Activated CD8-positive, alpha-beta T cell treated with anti-CD3 and anti-CD28 coated beads, Interleukin-2, amount 10 ng/mL, durations not matched to agents 7 days and 5 days (primary cell): ENCODE measurements at regions of chr6 and their contacts with region 1.

Region 1: GRCh38 chr6:16332175-16332542 is 93.8 kb downstream of the GMPR start:
- DNase-seq: peak; percentile 86
- ATAC-seq: peak; percentile 94
- H3K4me3 Mint-ChIP-seq: no peak overlapping the region
- H3K27ac Mint-ChIP-seq: no peak overlapping the region
- H3K4me1 Mint-ChIP-seq: no peaks in the 10 kb centered on the region
- H3K27me3 Mint-ChIP-seq: no peaks in the 10 kb centered on the region

Region 2: GRCh38 chr6:15817121-15817520 is 515.0 kb before region 1 on chr6:
- CTCF ChIA-PET with region 1: no interaction called
- POLR2A ChIA-PET with region 1: no interaction called
- DNase-seq: no peak
- ATAC-seq: no peak
- H3K4me3 Mint-ChIP-seq: no peak overlapping the region
- H3K27ac Mint-ChIP-seq: no peak overlapping the region
- H3K4me1 Mint-ChIP-seq: no peaks in the 10 kb centered on the region
- H3K27me3 Mint-ChIP-seq: peaks cover 3% of the 10 kb centered on the region

Region 3: DNA sequence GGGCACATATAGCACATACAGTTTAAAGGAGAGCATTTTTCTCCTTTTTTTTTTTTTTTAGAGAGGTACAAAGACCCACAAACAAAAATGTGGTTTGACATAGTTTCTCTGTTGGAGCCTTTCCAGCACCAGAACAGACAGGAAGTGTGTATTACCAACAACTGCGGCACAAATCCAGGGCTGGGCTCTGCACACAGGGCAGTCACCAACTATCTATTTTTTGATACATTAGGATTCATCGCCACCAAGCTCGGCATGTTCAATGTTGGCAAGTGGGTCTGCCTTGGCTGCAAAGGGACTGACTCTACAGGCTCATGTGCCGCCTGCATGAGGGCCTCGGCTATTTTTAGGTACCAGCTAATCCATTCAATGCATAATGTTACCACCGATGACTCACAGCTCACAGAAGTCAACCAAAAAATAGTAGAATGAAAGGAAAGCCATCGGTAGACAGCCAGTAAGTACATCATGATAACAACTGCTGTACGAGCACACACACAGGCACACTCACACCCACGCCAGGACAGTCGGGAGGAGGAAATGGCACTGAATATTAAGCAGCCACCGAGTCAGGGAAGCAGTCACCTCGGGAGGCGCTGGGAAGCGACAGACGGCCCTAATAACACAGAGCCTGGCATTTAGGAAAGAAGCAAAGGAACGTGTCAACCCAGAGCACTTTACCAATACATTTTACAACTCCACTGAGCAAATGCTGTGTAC is 12.2 kb before region 1 on chr6:
- CTCF ChIA-PET with region 1: interaction called, 109 read pairs
- POLR2A ChIA-PET with region 1: no interaction called
- DNase-seq: peak; percentile 79
- ATAC-seq: peak; percentile 79
- H3K4me3 Mint-ChIP-seq: peak overlapping the region; percentile 61
- H3K27ac Mint-ChIP-seq: peak overlapping the region; percentile 94
- H3K4me1 Mint-ChIP-seq: peaks cover 76% of the 10 kb centered on the region
- H3K27me3 Mint-ChIP-seq: no peaks in the 10 kb centered on the region

Region 4: DNA sequence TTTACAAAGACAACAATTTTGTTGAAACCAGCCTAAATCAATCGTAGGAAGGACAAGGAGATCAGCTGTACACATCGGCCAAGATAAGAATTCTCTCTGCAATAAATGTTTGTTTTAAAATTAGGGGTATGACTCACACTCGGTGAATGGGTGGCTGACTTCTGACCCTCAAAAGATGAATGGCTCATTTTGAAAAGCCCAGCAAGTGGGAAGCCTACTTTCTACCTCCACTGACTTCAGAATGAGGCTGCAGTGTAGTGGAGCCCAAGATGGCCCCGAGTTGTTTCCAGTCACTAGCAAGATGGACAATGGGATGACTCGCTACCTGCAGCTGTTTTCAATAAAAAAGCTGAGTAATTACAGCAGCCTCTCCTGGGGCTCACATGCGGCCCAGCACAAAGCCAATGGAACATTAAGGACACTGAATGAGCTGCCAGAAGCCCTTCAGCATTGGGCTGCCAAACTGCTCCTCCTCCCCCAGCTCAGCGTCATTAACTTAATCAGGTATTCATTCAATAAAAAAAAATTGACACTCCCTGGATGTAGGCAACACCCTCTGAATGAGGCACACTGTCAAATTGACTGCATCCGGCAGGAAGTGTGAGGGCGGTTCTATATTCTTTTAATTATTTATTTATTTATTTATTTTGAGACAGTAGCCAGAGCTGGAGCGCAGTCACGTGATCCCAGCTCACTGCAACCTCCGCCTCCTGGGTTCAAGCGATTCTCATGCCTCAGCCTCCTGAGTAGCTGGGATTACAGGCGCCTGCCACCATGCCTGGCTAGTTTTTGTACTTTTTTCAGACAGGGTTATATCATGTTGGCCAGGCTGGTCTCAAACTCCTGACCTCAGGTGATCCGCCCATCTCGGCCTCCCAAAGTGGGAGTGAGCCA is 13.5 kb after region 1 on chr6:
- CTCF ChIA-PET with region 1: interaction called, 28 read pairs
- POLR2A ChIA-PET with region 1: no interaction called
- DNase-seq: no peak
- ATAC-seq: no peak
- H3K4me3 Mint-ChIP-seq: no peak overlapping the region
- H3K27ac Mint-ChIP-seq: no peak overlapping the region
- H3K4me1 Mint-ChIP-seq: no peaks in the 10 kb centered on the region
- H3K27me3 Mint-ChIP-seq: no peaks in the 10 kb centered on the region

Region 5: DNA sequence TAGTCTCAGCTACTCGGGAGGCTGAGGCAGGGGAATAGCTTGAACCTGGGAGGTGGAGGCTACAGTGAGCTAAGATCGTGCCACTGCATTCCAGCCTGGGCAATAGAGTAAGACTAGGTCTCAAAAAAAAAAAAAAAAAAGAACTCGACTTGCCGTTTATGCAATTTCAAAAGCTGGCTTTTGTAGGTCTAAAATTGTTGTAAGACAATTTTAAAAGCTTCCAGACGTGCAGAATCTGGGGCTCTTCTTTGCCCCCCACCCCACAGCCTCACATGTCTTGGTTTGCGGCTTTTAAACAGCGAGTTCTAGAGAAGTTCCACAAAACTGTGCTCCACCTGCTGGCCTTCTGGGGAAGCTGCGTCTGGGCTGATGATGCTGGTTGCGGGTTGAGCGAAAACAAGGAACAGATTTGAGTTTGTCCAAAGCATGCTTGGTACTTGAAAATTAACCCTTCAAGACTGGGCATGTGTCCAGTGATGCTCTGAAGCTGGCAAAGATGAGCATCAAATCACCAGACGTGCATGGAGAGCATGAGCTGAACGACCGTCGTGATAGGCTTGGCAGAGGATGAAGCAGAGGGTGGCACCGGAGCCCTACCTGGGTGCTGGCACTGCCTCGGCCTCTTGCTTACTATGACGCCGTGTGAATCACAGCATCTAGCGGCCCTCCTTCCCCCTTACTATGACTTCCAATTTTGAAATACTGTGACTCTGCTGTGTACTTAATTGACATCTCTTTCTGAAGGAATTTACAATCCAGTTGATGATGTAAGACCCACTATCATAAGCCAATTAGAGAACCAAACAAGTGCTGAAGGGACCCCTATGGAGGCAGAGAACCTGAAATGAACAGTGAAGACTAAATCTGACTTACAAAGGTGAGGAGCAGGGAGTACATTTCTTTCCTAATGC is 77.6 kb after region 1 on chr6:
- CTCF ChIA-PET with region 1: interaction called, 19 read pairs
- POLR2A ChIA-PET with region 1: no interaction called
- DNase-seq: peak; percentile 72
- ATAC-seq: peak; percentile 82
- H3K4me3 Mint-ChIP-seq: no peak overlapping the region
- H3K27ac Mint-ChIP-seq: no peak overlapping the region
- H3K4me1 Mint-ChIP-seq: peaks cover 38% of the 10 kb centered on the region
- H3K27me3 Mint-ChIP-seq: no peaks in the 10 kb centered on the region